Right cardiac atrium (tissue), 5 donors: ENCODE measurements at regions of chr21 and their contacts with region 1.

Region 1: DNA sequence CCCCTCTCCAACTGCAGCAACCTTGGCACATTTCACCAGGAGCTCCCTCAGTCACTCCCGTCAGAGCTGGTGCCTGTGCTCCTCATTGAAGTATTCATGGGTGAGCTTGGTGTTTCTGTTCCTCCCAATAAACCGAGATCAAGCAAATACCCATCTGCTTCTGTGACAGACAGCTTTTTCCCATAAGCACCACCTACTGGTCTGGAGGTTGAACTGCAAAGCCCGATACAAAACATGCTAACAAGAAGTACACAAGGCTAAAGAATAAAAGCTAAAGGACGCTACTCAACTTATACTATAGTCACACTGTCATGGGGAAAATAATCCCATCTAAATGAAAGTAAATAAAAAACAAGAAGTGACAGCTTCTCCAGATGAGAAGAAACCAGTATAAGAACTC is 111.9 kb upstream of the C21orf91 start:
- DNase-seq: no peak
- ATAC-seq: no peak
- H3K4me3 ChIP-seq: no peak overlapping the region
- H3K27ac ChIP-seq: no peak overlapping the region
- H3K4me1 ChIP-seq: no peaks in the 10 kb centered on the region
- H3K27me3 ChIP-seq: no peaks in the 10 kb centered on the region

Region 2: DNA sequence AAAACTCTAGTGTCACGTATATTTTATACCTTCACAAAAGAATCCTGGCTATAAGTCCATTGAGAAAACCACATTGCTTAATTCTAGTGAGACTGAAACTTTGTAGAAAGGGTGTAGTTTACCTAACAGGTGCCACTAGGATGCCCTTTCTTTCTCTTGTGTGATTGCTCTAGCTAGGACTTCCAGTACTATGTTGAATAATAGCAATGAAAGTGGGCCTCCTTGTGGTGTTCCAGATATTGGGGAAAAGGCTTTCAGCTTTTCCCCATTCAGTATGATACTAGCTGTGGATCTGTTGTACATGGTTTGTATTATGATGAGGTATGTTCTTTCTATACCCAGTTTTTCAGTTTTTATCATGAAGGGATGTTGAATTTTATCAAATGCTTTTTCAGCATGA is 273.9 kb after region 1 on chr21:
- intact Hi-C with region 1: loop called in 1 of 4 experiments (anchors 5 kb)
- DNase-seq: no peak
- ATAC-seq: no peak
- H3K4me3 ChIP-seq: no peak overlapping the region
- H3K27ac ChIP-seq: no peak overlapping the region
- H3K4me1 ChIP-seq: no peaks in the 10 kb centered on the region
- H3K27me3 ChIP-seq: no peaks in the 10 kb centered on the region